Activated CD4-positive, alpha-beta T cell treated with anti-CD3 and anti-CD28 coated beads, Interleukin-2, amount 10 ng/mL, durations not matched to agents 24 days and 14 days (primary cell): ENCODE measurements at regions of chr10 and their contacts with region 1.

Region 1: DNA sequence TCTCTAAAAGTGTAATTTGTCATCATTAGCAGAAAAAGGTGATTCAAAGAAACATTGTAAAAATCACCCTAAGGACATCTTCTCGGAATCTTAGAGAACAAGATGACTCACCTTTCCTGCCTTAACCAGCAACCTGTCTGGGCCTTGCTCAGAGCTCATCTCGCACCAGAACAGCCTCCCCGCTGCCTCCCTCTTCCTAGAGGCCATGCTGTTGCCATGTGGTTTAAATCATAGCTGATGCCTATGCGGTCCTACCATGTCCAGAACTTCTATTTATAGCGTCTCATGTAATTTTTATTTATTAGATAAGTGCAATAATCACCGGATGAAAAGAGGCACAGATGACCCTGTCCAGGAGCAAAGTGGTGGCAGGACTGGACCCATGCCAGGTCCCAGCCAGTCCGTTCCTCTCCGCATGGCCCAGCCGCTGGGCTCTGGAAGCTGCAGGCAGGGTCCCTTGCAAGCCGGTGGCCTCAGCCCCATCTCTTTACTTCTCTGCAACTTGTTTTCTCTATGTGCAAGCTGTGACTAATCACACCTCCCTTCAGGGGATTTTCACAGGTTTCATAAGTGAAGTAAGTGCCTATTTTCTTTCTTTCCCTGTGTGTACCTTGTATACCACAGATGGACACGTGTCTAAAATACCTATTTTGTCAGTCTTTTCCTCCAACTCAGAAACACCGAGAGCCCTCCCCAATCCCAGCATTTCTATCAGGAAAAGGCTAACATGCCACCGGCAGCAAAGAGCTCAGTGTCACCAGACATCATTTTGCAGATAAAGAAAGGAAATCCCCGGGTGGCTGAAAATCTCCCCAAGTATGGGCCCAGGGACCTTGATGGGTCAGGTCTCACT is 27.1 kb downstream of the KLF6 start:
- DNase-seq: peak; percentile 90
- H3K4me3 Mint-ChIP-seq: peak overlapping the region; percentile 82
- H3K27ac Mint-ChIP-seq: peak overlapping the region; percentile 100
- H3K4me1 Mint-ChIP-seq: peaks cover 71% of the 10 kb centered on the region
- H3K27me3 Mint-ChIP-seq: no peaks in the 10 kb centered on the region

Region 2: GRCh38 chr10:2494399-2494798 is 1263.5 kb before region 1 on chr10:
- intact Hi-C with region 1: no loop called
- DNase-seq: no peak
- H3K4me3 Mint-ChIP-seq: no peak overlapping the region
- H3K27ac Mint-ChIP-seq: no peak overlapping the region
- H3K4me1 Mint-ChIP-seq: no peaks in the 10 kb centered on the region
- H3K27me3 Mint-ChIP-seq: no peaks in the 10 kb centered on the region

Region 3: DNA sequence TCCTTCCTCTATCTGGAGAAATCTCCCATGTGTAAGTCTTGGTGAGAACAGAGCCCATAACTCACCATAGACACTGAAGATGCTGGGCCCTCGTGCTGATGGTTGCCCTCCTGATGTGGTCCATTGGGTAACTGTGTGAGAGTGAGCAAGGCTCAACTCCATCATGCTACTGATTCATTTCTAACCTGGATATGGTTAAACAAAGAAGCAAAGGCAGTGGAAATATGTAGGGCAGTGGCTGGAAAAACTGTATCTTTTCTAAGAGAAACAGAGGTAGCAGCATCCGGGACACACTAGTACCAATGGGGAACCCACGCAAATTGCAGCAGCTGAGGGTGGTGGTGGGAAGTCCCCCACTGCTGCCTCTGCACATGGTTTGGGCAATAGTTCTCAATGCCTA is 194.6 kb before region 1 on chr10:
- intact Hi-C with region 1: loop called (anchors 5 kb)
- DNase-seq: peak; percentile 65
- H3K4me3 Mint-ChIP-seq: no peak overlapping the region
- H3K27ac Mint-ChIP-seq: peak overlapping the region; percentile 86
- H3K4me1 Mint-ChIP-seq: peaks cover 12% of the 10 kb centered on the region
- H3K27me3 Mint-ChIP-seq: peaks cover 2% of the 10 kb centered on the region

Region 4: DNA sequence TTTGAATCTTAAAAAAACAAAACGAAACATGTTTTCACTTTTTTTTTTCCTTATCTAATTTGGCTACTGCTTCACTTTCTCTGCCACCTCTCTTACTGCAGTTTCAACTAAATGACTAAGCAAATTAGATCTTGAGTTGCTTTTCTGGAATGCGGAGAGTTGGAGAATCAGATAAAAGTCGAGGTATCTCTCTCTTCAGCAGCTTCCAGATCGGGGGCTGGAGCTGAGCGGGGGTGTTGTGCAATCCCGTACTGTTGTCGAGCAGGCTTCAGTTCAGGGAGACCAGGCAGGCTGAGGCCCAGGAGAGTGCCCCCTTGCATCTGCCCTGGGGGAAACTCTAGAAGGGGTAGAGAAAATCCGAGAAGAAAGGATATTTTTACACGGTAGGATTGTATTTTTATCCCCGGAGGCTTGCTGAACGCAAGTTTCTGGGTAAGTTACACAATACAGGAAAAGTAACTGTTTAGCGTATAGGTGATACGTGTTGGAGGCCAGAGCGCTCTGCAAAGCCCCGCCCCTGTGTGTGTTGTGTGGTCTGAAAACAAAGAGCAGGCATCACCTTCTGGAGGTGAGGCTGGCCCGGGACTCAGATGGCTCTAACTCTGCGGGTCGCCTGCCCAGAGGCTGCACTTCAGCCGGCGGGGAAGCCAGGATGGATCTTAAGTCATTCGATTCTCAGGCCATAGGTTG is 89.4 kb before region 1 on chr10:
- intact Hi-C with region 1: loop called (anchors 5 kb)
- DNase-seq: peak; percentile 89
- H3K4me3 Mint-ChIP-seq: peak overlapping the region; percentile 86
- H3K27ac Mint-ChIP-seq: peak overlapping the region; percentile 92
- H3K4me1 Mint-ChIP-seq: peaks cover 34% of the 10 kb centered on the region
- H3K27me3 Mint-ChIP-seq: peaks cover 2% of the 10 kb centered on the region

Region 5: GRCh38 chr10:3740157-3740871 is 17.6 kb before region 1 on chr10:
- intact Hi-C with region 1: loop called (anchors 1 kb)
- DNase-seq: no peak
- H3K4me3 Mint-ChIP-seq: no peak overlapping the region
- H3K27ac Mint-ChIP-seq: peak overlapping the region; percentile 57
- H3K4me1 Mint-ChIP-seq: peaks cover 25% of the 10 kb centered on the region
- H3K27me3 Mint-ChIP-seq: no peaks in the 10 kb centered on the region

Region 6: GRCh38 chr10:3805791-3806461 is 48.1 kb after region 1 on chr10:
- intact Hi-C with region 1: loop called (anchors 1 kb)
- DNase-seq: peak; percentile 87
- H3K4me3 Mint-ChIP-seq: peak overlapping the region; percentile 48
- H3K27ac Mint-ChIP-seq: no peak overlapping the region
- H3K4me1 Mint-ChIP-seq: peaks cover 64% of the 10 kb centered on the region
- H3K27me3 Mint-ChIP-seq: no peaks in the 10 kb centered on the region